Naive thymus-derived CD4-positive, alpha-beta T cell (primary cell): ENCODE measurements at regions of chr22 and their contacts with region 1.

Region 1: DNA sequence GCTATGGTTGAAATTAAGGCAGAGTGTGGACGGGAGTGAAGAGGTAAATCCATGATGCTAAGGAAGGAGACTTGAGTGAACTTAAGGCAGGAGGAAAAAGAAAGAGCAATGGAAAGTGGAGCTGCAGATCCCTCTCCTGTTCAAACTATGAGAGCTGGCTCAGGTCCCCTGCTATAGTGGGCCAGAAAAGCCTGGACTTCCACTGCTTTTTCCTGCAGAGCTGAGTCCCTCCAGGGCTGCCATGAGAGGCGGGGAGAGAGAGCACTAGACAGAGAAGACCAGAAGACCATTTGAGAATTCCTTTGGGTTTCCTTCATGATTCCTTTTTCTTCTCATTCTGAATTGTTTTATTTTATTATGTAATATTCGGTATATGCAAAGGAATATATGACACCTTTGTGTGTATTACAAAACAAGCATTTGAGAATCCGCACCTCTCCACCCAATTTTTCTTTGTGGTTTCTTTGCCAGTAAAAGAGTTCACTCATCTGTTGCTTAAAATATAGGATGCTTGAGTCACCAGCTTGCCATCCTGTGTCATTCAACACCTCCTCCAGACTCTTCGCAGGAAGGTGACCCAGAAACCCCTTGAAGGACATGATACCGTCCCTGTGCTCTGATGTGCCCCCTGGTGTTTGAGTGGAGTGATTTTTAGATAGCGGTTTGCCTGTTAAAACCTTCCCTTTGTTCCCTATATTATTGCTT is 24.4 kb downstream of the SREBF2 start:
- DNase-seq: peak; percentile 27 to 76 (median 65)
- ATAC-seq: peak; percentile 87
- H3K4me3 ChIP-seq: no peak overlapping the region
- H3K4me3 Mint-ChIP-seq: peak overlapping the region; percentile 3 to 67 (median 36)
- H3K27ac ChIP-seq: no peak overlapping the region
- H3K27ac Mint-ChIP-seq: peak overlapping the region; percentile 62 to 91 (median 82)
- H3K4me1 ChIP-seq: peaks cover 17 to 26% of the 10 kb centered on the region in 2 donors
- H3K4me1 Mint-ChIP-seq: peaks cover 33 to 69% (median 54%) of the 10 kb centered on the region in 7 donors
- H3K27me3 ChIP-seq: no peaks in the 10 kb centered on the region
- H3K27me3 Mint-ChIP-seq: no peaks in the 10 kb centered on the region

Region 2: DNA sequence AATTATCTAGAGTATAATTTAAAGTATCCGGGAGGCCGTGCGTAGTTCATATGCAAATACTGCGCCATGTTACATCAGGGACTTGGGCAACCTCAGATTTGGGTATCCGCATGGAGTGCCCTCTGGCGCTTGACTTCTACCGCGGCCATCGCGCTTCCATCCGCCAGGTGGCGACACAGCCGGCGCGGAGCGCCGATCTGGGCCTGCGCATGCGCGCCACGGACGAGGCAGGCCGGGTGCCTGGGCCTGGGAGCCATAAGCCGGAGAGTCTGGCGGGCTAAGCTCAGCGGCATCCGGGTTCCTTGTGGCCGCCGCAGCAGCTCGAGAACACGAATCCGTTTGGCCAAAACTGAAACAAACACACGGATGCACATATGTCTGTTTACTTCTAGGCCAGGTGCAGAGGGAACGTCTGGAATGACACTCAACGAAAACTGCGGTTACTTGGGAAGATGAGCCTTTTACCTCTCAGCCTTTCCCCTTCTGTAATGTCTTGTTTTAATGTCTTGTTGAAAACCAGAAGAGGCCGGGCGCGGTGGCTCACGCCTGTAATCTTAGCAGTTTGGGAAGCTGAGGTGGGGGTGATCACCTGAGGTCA is 190.5 kb before region 1 on chr22:
- CTCF ChIA-PET with region 1: no interaction called
- POLR2A ChIA-PET with region 1: no interaction called
- intact Hi-C with region 1: loop called in 1 of 2 experiments (anchors 1 kb)
- DNase-seq: peak; percentile 88 to 97 (median 95)
- ATAC-seq: peak; percentile 98
- H3K4me3 ChIP-seq: peak overlapping the region; percentile 44
- H3K4me3 Mint-ChIP-seq: peak overlapping the region; percentile 75 to 87 (median 82)
- H3K27ac ChIP-seq: peak overlapping the region; percentile 72
- H3K27ac Mint-ChIP-seq: peak overlapping the region; percentile 91 to 99 (median 97)
- H3K4me1 ChIP-seq: peaks cover 7% of the 10 kb centered on the region in 2 donors
- H3K4me1 Mint-ChIP-seq: peaks cover 0 to 25% (median 10%) of the 10 kb centered on the region in 7 donors
- H3K27me3 ChIP-seq: no peaks in the 10 kb centered on the region
- H3K27me3 Mint-ChIP-seq: no peaks in the 10 kb centered on the region

Region 3: GRCh38 chr22:41746567-41747400 is 110.5 kb before region 1 on chr22:
- CTCF ChIA-PET with region 1: interaction called, 22 read pairs
- POLR2A ChIA-PET with region 1: no interaction called
- intact Hi-C with region 1: loop called (anchors 1 kb)
- DNase-seq: peak; percentile 23 to 65 (median 52)
- ATAC-seq: peak; percentile 92
- H3K4me3 ChIP-seq: no peak overlapping the region
- H3K4me3 Mint-ChIP-seq: no peak overlapping the region
- H3K27ac ChIP-seq: no peak overlapping the region
- H3K27ac Mint-ChIP-seq: peak overlapping the region in 2 of 9 donors; percentile 2 to 36
- H3K4me1 ChIP-seq: no peaks in the 10 kb centered on the region
- H3K4me1 Mint-ChIP-seq: peaks cover 0 to 6% (median 0%) of the 10 kb centered on the region in 7 donors
- H3K27me3 ChIP-seq: no peaks in the 10 kb centered on the region
- H3K27me3 Mint-ChIP-seq: peaks cover 0 to 48% (median 0%) of the 10 kb centered on the region in 5 donors

Region 4: GRCh38 chr22:41810022-41810421 is 47.3 kb before region 1 on chr22:
- CTCF ChIA-PET with region 1: no interaction called
- POLR2A ChIA-PET with region 1: no interaction called
- intact Hi-C with region 1: no loop called
- DNase-seq: no peak
- ATAC-seq: no peak
- H3K4me3 ChIP-seq: no peak overlapping the region
- H3K4me3 Mint-ChIP-seq: no peak overlapping the region
- H3K27ac ChIP-seq: no peak overlapping the region
- H3K27ac Mint-ChIP-seq: no peak overlapping the region
- H3K4me1 ChIP-seq: no peaks in the 10 kb centered on the region
- H3K4me1 Mint-ChIP-seq: peaks cover 0 to 15% (median 6%) of the 10 kb centered on the region in 7 donors
- H3K27me3 ChIP-seq: no peaks in the 10 kb centered on the region
- H3K27me3 Mint-ChIP-seq: no peaks in the 10 kb centered on the region

Region 5: GRCh38 chr22:41822317-41823060 is 34.8 kb before region 1 on chr22:
- CTCF ChIA-PET with region 1: interaction called, 12 read pairs
- POLR2A ChIA-PET with region 1: interaction called, 3 read pairs
- intact Hi-C with region 1: loop called (anchors 1 kb)
- DNase-seq: peak in 8 of 9 donors; percentile 30 to 78 (median 70)
- ATAC-seq: peak; percentile 87
- H3K4me3 ChIP-seq: no peak overlapping the region
- H3K4me3 Mint-ChIP-seq: no peak overlapping the region
- H3K27ac ChIP-seq: peak overlapping the region; percentile 4
- H3K27ac Mint-ChIP-seq: peak overlapping the region; percentile 35 to 90 (median 76)
- H3K4me1 ChIP-seq: no peaks in the 10 kb centered on the region
- H3K4me1 Mint-ChIP-seq: peaks cover 5 to 33% (median 15%) of the 10 kb centered on the region in 7 donors
- H3K27me3 ChIP-seq: no peaks in the 10 kb centered on the region
- H3K27me3 Mint-ChIP-seq: no peaks in the 10 kb centered on the region

Region 6: DNA sequence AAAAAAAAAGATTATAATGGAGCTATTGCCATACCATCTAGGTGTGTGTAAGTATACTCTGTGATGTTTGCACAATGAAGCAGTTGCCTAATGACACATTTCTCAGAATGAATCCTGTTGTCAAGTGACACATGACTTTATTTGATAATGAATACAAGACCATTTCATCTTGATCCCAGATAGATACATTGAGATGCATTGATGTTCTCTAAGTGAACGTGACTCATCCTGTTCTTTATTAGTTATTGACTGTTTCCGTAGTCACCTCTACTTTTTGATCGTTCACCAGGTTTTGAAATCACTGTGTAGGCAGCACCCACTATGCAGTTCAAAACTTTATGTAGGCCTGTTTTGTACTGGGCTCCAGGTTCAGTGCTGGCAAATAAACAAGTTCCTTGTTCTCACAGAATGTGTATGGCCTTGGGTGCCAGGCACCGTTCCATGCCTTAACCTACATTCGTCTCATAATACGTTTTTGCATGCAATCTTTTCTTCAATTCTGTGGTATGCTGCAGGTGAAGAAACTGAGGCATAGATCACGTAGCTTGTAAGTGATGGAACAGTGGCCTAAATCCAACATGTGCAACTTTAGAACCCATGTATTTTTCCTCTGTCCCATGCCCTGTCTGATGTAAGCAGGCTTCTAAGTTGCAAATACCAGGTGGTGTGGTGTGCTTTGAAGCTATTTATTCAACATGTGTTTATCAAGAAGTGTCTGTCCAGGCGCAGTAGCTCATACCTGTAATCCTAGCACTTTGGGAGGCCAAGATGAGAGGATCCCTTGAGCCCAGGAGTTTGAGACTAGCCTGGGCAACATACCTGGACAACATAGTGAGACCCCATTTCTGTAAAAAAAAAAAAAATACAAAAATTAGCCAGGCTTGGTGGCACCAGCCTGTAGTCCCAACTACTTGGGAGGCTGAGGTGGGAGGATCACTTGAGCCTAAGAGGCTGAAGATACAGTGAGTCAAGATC is 14.0 kb before region 1 on chr22:
- CTCF ChIA-PET with region 1: interaction called, 12 read pairs
- POLR2A ChIA-PET with region 1: interaction called, 4 read pairs
- intact Hi-C with region 1: no loop called
- DNase-seq: peak in 1 of 9 donors; percentile 30
- ATAC-seq: no peak
- H3K4me3 ChIP-seq: no peak overlapping the region
- H3K4me3 Mint-ChIP-seq: peak overlapping the region in 1 of 10 donors; percentile 23
- H3K27ac ChIP-seq: no peak overlapping the region
- H3K27ac Mint-ChIP-seq: peak overlapping the region in 4 of 9 donors; percentile 2 to 60 (median 27)
- H3K4me1 ChIP-seq: peaks cover 2 to 13% of the 10 kb centered on the region in 2 donors
- H3K4me1 Mint-ChIP-seq: peaks cover 38 to 82% (median 71%) of the 10 kb centered on the region in 7 donors
- H3K27me3 ChIP-seq: no peaks in the 10 kb centered on the region
- H3K27me3 Mint-ChIP-seq: no peaks in the 10 kb centered on the region

Region 7: DNA sequence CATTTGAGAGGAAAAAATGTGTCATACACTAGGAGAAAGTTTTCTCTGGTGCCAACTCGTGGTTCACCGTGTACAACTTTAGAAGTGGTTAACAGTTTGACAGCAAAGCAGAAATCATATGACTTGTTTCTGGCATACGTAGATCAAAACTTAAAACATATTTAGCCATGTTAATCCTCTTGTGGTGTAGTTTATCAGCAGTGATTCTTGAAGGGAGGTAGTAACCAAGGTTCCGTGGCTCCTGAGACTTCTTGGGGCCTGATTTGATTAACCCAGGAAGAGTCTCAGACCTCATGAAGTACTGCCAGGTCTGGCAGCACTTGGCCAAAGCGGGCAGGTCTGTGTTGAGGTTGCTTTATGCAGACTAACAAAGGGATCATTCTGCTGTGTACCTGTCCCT is 16.1 kb after region 1 on chr22:
- CTCF ChIA-PET with region 1: interaction called, 3 read pairs
- POLR2A ChIA-PET with region 1: interaction called, 3 read pairs
- intact Hi-C with region 1: loop called in 1 of 2 experiments (anchors 1 kb)
- DNase-seq: peak in 7 of 9 donors; percentile 36 to 69 (median 60)
- ATAC-seq: peak; percentile 86
- H3K4me3 ChIP-seq: no peak overlapping the region
- H3K4me3 Mint-ChIP-seq: peak overlapping the region in 8 of 10 donors; percentile 10 to 68 (median 38)
- H3K27ac ChIP-seq: peak overlapping the region; percentile 54
- H3K27ac Mint-ChIP-seq: peak overlapping the region; percentile 82 to 96 (median 88)
- H3K4me1 ChIP-seq: no peaks in the 10 kb centered on the region
- H3K4me1 Mint-ChIP-seq: peaks cover 0 to 29% (median 18%) of the 10 kb centered on the region in 7 donors
- H3K27me3 ChIP-seq: no peaks in the 10 kb centered on the region
- H3K27me3 Mint-ChIP-seq: no peaks in the 10 kb centered on the region

Region 8: DNA sequence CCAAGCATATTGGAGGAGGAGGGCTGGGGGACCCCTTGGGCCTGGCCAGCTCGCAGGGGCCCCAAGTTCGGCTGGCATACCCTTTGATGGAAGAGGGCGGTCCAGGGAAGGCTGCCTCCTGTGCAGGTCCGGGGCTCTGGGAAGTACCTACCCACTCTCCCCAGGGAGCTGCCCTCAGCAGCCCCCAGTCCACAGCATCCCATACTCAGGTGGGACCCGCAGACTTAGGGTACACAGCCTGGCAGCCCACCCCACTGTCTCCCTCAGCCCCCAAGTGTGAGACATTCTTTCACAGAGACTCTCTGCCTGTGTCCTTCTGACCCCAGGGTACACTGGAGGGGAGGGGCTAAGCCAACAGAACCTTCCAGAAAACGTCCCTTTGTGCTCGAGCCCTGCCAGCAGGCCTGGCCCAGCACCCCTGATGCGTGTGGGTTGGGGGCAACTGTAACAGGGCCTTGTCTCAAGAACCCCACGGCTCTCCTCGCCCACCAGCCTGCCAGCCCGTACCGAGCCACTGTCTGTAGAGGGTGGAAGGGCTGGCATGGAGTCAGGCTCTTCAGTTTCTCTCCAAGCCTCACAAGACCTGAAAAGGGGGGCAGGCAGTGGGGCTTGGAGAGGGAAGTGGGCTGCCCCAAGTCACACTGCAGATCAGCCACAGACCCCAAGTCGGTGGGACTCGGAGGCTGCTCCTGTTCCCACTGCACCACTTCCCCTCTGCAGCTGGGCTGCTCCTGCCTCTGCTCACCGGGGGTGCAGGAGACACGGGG is 76.3 kb after region 1 on chr22:
- CTCF ChIA-PET with region 1: no interaction called
- POLR2A ChIA-PET with region 1: no interaction called
- intact Hi-C with region 1: no loop called
- DNase-seq: peak in 1 of 9 donors; percentile 20
- ATAC-seq: peak; percentile 17
- H3K4me3 ChIP-seq: no peak overlapping the region
- H3K4me3 Mint-ChIP-seq: no peak overlapping the region
- H3K27ac ChIP-seq: no peak overlapping the region
- H3K27ac Mint-ChIP-seq: peak overlapping the region in 1 of 9 donors; percentile 60
- H3K4me1 ChIP-seq: peaks cover 0 to 2% of the 10 kb centered on the region in 2 donors
- H3K4me1 Mint-ChIP-seq: peaks cover 0 to 7% (median 3%) of the 10 kb centered on the region in 7 donors
- H3K27me3 ChIP-seq: no peaks in the 10 kb centered on the region
- H3K27me3 Mint-ChIP-seq: no peaks in the 10 kb centered on the region